ENCODE measurements at regions of chr1 and their contacts with region 1.

Region 1: DNA sequence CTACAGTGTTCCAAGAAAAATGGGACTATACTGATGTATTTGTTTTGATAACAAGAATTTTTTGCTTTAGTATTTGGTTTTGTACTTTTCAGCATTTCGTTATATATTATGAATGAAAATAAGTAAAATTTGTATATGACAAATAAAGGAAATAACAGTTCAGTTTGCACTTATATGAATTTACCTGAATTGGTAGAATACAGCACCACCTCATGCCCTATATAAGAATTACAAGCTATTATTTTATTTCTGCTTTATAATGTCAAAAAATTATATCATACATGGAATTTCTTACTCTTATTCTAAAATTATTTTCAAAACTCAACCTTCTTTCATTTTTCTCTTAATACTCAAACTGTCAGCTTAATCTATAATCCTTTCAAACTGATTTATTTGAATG is 14.6 kb downstream of the EFCAB7 start:
- DNase-seq: no peak
- ATAC-seq: no peak
- H3K4me3 ChIP-seq: no peak overlapping the region
- H3K27ac ChIP-seq: no peak overlapping the region
- H3K4me1 ChIP-seq: no peaks in the 10 kb centered on the region
- H3K27me3 ChIP-seq: no peaks in the 10 kb centered on the region
- CTCF ChIP-seq: peak in 1 of 5 experiments; percentile 34
- POLR2A ChIP-seq: no peak

Region 2: GRCh38 chr1:62841587-62842169 is 696.3 kb before region 1 on chr1:
- in situ Hi-C with region 1: loop called in 1 of 4 experiments (anchors 25 kb)
- intact Hi-C with region 1: loop called (anchors 5 kb)
- DNase-seq: peak in 1 of 2 donors; percentile 3
- ATAC-seq: peak; percentile 58 to 86
- H3K4me3 ChIP-seq: no peak overlapping the region
- H3K27ac ChIP-seq: no peak overlapping the region
- H3K4me1 ChIP-seq: peaks cover 4% of the 10 kb centered on the region in 2 donors
- H3K27me3 ChIP-seq: no peaks in the 10 kb centered on the region
- CTCF ChIP-seq: peak; percentile 40 to 72 (median 51)
- POLR2A ChIP-seq: no peak

Region 3: DNA sequence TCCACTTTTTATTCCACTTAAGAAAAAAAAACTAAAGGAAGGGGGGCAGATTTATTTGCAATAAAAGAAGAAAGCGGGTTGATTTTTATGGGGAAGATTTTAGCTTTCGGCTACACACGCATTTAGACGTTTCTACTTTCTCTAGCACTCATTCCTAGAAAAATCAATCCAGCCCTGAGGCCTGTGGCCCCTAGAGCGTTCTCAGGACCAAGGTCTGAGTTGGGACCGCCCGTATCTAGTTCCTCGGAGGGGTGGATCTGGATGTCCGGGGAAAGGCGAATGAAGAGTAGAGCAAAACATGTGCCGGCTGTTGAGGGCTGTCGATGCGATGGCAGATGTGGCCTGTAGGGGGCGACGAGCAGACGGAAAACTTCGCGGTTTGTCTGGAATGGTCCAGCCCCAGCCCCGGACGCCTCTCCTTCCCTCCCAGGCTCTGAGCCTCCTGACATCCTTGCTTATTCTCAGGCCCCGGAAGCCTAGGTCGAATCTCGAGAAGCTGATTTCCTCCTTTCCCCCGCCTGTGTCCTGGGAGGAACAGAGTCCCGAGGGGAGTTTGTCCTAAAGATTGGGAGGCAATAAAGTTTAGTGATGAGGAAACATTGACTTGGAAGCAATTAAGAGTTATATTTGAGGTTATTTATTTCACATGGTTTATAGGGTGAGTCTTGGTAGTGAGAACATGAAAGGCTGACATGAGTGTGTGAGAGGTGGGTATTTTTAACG is 210.4 kb before region 1 on chr1:
- in situ Hi-C with region 1: no loop called
- intact Hi-C with region 1: loop called (anchors 5 kb)
- DNase-seq: peak in 1 of 2 donors; percentile 53
- ATAC-seq: peak; percentile 65 to 66
- H3K4me3 ChIP-seq: no peak overlapping the region
- H3K27ac ChIP-seq: no peak overlapping the region
- H3K4me1 ChIP-seq: peaks cover 4 to 6% of the 10 kb centered on the region in 2 donors
- H3K27me3 ChIP-seq: peaks cover 95 to 96% (median 95%) of the 10 kb centered on the region in 3 donors
- CTCF ChIP-seq: peak; percentile 54 to 73 (median 63)
- POLR2A ChIP-seq: no peak

Region 4: GRCh38 chr1:64072089-64072793 is 534.3 kb after region 1 on chr1:
- in situ Hi-C with region 1: no loop called
- intact Hi-C with region 1: no loop called
- DNase-seq: no peak
- ATAC-seq: no peak
- H3K4me3 ChIP-seq: no peak overlapping the region
- H3K27ac ChIP-seq: no peak overlapping the region
- H3K4me1 ChIP-seq: peaks cover 29 to 37% of the 10 kb centered on the region in 2 donors
- H3K27me3 ChIP-seq: no peaks in the 10 kb centered on the region
- CTCF ChIP-seq: no peak
- POLR2A ChIP-seq: no peak